ENCODE measurements at regions of chr10 and their contacts with region 1.

Region 1: DNA sequence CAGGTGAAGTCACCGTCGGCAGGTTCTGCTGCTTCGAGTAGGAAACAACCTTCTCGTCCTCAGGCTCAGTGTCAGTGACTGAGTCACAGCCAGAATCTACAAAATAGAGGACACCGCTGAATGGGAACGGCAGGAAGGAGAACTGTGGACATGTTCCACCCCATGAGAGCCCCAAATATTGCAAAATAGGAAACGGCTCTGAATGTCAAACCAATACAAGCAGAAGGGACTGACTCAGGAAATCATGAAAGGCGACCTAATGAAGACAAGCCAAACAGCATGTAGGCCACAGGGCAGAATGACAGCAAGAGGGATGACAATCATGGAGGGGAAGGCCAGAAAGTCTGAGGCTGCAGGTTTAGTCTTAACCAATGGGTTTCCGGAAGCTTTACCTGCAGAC is 63.5 kb downstream of the PIK3AP1 start:
- DNase-seq: no peak
- H3K4me3 ChIP-seq: no peak overlapping the region
- H3K27ac ChIP-seq: no peak overlapping the region
- H3K4me1 ChIP-seq: no peaks in the 10 kb centered on the region
- H3K27me3 ChIP-seq: no peaks in the 10 kb centered on the region
- CTCF ChIP-seq: no peak

Region 2: DNA sequence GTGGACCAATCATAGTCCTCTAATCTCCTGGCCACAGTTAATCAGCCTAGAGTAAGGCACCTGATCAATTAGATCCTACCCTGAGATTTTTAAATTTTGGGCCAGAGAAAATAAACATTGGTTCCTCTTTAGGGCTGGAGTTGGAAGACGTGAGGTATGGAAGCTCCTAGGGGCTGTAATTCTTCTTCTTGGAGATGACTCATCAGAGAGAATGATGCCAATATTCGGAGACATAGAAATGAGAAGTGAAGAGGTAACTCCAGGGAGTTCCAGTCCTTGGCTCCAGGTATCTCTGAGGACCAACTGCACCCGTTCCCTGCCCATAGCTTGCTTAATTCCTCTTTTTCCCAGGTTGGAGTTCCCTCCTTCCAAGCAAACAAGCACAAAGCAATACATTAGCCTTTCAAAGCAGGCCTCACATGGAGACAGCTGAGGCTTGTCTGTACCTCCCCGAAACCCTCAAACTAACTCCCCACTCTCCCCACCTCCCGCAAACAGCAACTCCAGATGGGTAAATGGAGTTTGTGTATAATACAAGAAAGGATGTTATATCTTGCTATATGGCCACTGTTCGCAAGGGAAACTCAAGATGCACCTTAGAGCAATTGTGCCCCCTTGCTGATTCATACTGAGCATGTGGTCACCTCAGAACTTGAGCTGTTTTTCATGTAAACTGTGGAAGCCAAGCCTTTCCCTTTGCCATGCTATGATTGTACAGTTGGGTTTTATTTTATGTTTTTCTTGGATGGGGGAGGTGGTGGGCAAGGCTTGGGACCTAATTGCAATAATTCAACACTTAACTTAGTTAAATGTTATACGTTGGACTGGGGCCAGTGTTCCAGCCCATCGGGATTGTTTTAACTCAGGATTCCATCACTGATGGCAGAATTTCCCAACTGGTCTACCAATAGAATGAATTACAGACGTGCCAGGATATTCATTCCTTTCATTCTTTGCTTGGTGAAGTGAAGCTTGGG is 34.2 kb after region 1 on chr10:
- CTCF ChIA-PET with region 1: no interaction called
- dilution Hi-C with region 1: loop called (anchors 5 kb)
- in situ Hi-C with region 1: no loop called
- intact Hi-C with region 1: no loop called
- DNase-seq: no peak
- H3K4me3 ChIP-seq: no peak overlapping the region
- H3K27ac ChIP-seq: no peak overlapping the region
- H3K4me1 ChIP-seq: no peaks in the 10 kb centered on the region
- H3K27me3 ChIP-seq: no peaks in the 10 kb centered on the region
- CTCF ChIP-seq: no peak